Psoas muscle (tissue), 8 donors: ENCODE measurements at regions of chr7 and their contacts with region 1.

Region 1: DNA sequence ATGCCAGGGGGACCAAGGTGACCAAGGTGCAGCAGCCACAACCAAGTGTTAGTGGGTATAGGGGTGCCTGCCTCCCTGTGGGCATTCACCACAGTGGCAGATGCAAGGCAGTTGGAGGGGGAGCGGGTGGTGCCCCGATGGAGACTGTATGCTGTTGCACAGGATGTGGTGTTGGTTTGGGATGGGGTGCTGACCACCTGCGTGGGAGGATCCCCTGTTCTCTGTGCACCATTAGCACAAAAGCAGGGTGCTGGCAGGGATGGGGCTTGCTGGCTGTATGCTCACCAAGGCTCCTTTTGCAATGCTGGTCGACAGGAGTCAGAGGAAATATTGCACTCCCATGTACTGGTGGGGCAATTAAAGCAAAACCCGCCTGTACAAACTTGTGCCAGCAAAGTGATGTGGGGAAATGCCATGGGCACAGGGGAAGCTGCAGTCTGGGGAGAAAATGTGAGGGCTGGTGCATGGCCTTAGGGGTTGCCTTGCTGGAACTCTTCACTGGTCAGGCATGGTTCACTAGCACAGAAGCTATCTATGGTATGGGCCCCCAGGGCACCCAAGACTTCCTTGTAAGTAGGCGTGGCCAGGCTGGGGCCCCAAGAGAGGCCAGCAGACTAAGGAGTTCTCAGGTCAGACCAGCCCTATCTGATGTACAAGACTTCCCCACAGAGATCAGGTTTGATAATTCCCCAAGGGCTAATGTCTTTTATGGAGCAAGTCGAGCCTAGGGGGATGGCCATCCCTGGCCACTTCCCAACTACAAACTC is 51.9 kb upstream of the GNAT3 start:
- DNase-seq: no peak
- ATAC-seq: no peak
- H3K4me3 ChIP-seq: no peak overlapping the region
- H3K27ac ChIP-seq: no peak overlapping the region
- H3K4me1 ChIP-seq: no peaks in the 10 kb centered on the region
- H3K27me3 ChIP-seq: no peaks in the 10 kb centered on the region
- CTCF ChIP-seq: no peak

Region 2: DNA sequence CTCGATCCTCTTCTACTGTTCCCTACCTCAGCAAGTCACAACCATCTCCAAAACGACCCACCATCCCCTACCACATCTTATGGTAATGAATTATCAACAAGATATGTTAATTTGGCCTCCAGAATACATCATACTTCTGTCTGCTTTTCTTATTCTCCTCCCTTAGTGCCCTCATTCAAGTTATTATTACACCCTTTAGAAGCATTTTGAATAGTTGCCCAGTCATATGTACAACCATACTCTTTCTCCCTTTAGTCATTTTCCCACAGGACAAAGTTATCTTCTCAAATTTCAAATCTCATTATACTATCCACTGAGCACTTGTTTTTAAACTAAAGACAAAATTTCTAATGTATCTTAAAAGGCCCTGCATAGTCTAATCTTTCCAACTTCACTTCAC is 122.9 kb before region 1 on chr7:
- intact Hi-C with region 1: no loop called
- DNase-seq: no peak
- ATAC-seq: no peak
- H3K4me3 ChIP-seq: no peak overlapping the region
- H3K27ac ChIP-seq: no peak overlapping the region
- H3K4me1 ChIP-seq: no peaks in the 10 kb centered on the region
- H3K27me3 ChIP-seq: no peaks in the 10 kb centered on the region
- CTCF ChIP-seq: no peak

Region 3: GRCh38 chr7:80520194-80520593 is 43.5 kb before region 1 on chr7:
- intact Hi-C with region 1: loop called in 1 of 2 experiments (anchors 5 kb)
- DNase-seq: no peak
- ATAC-seq: no peak
- H3K4me3 ChIP-seq: no peak overlapping the region
- H3K27ac ChIP-seq: no peak overlapping the region
- H3K4me1 ChIP-seq: peaks cover 6% of the 10 kb centered on the region
- H3K27me3 ChIP-seq: no peaks in the 10 kb centered on the region
- CTCF ChIP-seq: no peak

Region 4: DNA sequence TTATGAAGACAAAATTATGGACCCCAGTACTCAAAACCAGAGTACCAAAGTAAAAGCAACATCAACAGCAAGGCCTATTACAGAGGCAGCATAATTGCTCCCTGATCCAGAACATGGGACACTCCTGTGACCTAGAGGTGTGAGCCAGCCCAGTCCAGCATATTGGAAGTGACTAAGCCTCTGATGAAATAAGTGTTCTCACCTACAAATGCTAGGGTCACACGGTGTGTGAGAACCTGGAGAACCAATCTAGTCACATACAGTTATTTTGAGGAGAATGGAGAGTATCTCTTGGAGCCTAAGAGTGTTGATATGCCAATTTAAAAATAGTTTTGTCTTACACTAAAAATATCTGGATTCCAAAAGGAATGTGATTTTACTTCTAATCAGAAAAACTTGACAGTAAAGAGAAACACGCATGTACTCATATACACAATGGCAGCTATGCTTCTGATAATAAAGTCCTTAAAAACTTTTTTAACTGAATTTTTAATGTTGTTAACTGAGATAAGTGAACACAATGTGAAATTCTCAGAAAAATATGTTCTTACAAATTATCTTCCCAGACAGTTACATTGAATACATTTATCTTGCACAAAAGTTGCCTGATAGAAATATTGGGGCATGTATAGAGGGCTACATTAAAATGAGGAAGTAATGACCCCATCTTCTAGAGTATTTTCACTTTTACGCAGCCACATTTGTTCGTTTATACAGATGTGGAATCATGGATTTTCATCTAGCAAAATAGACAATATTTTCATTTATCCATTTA is 17.9 kb after region 1 on chr7:
- intact Hi-C with region 1: no loop called
- DNase-seq: peak in 1 of 2 donors; percentile 47
- ATAC-seq: peak; percentile 91 to 96 (median 95)
- H3K4me3 ChIP-seq: no peak overlapping the region
- H3K27ac ChIP-seq: peak overlapping the region; percentile 73
- H3K4me1 ChIP-seq: peaks cover 31% of the 10 kb centered on the region
- H3K27me3 ChIP-seq: no peaks in the 10 kb centered on the region
- CTCF ChIP-seq: no peak

Region 5: DNA sequence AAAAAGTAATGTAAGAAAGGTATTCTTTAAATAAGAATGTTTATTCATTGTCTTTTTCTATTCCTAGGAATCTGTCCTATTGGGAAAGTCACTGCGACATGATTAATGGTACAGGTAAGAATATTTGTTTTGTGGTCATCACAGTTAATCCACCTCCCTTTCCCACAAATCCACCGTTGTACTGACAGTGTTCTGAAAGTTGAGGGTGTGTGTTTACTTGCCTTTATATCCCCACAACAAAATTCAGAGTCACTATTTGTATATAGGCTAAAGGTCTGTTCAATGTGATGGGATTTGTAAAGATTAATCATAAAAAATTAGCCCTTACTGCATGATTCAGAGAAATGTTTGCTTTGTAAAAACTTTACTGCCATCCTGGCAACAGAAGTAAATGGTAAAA is 102.6 kb after region 1 on chr7:
- intact Hi-C with region 1: no loop called
- DNase-seq: no peak
- ATAC-seq: no peak
- H3K4me3 ChIP-seq: no peak overlapping the region
- H3K27ac ChIP-seq: no peak overlapping the region
- H3K4me1 ChIP-seq: no peaks in the 10 kb centered on the region
- H3K27me3 ChIP-seq: no peaks in the 10 kb centered on the region
- CTCF ChIP-seq: no peak